ENCODE measurements at regions of chr22 and their contacts with region 1.

Region 1: GRCh38 chr22:20495861-20496681 is 476 bp upstream of the KLHL22 start:
- DNase-seq: peak; percentile 94
- ATAC-seq: peak; percentile 98
- H3K4me3 Mint-ChIP-seq: peak overlapping the region; percentile 88
- H3K27ac Mint-ChIP-seq: peak overlapping the region; percentile 84
- H3K4me1 Mint-ChIP-seq: peaks cover 34% of the 10 kb centered on the region
- H3K27me3 Mint-ChIP-seq: no peaks in the 10 kb centered on the region
- CTCF ChIP-seq: peak; percentile 95

Region 2: GRCh38 chr22:20430720-20431510 is 65.2 kb before region 1 on chr22:
- CTCF ChIA-PET with region 1: no interaction called
- POLR2A ChIA-PET with region 1: interaction called, 3 read pairs
- intact Hi-C with region 1: loop called (anchors 10 kb)
- DNase-seq: peak; percentile 65
- ATAC-seq: peak; percentile 47
- H3K4me3 Mint-ChIP-seq: peak overlapping the region; percentile 49
- H3K27ac Mint-ChIP-seq: no peak overlapping the region
- H3K4me1 Mint-ChIP-seq: peaks cover 15% of the 10 kb centered on the region
- H3K27me3 Mint-ChIP-seq: peaks cover 65% of the 10 kb centered on the region
- CTCF ChIP-seq: no peak

Region 3: DNA sequence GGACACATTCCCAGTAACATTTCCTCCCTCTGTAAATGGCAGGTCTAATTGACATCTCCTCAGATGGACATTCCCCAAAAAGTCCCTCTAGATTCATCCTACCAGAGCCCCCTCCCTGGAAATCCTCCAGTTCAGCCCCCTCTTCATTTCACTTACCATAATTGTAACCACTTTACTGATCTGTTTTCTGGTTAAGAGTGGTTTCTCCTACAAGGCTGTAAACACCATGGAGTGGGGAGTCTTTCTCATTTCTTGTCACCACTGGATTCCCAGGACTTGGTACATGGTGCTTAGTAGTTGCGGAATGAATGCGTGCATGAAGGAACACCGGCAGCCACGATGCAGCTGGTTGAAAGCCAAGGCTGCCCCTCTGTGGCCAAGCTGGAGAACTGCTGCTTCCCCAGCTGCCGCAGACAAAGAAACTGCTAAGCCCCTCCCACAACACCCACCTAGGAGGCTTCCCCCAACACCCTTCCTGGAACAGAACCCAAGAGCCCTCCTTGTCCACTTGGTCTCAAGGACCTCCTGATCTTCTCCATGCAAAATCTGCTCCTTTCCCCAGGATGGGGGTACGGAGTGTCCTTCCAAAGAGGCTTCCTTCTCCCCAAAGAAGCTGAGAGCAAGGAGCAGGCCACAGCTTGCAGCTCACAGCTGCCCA is 39.9 kb before region 1 on chr22:
- CTCF ChIA-PET with region 1: interaction called, 14 read pairs
- POLR2A ChIA-PET with region 1: no interaction called
- intact Hi-C with region 1: no loop called
- DNase-seq: peak; percentile 83
- ATAC-seq: peak; percentile 100
- H3K4me3 Mint-ChIP-seq: no peak overlapping the region
- H3K27ac Mint-ChIP-seq: peak overlapping the region; percentile 41
- H3K4me1 Mint-ChIP-seq: peaks cover 15% of the 10 kb centered on the region
- H3K27me3 Mint-ChIP-seq: no peaks in the 10 kb centered on the region
- CTCF ChIP-seq: peak; percentile 87

Region 4: DNA sequence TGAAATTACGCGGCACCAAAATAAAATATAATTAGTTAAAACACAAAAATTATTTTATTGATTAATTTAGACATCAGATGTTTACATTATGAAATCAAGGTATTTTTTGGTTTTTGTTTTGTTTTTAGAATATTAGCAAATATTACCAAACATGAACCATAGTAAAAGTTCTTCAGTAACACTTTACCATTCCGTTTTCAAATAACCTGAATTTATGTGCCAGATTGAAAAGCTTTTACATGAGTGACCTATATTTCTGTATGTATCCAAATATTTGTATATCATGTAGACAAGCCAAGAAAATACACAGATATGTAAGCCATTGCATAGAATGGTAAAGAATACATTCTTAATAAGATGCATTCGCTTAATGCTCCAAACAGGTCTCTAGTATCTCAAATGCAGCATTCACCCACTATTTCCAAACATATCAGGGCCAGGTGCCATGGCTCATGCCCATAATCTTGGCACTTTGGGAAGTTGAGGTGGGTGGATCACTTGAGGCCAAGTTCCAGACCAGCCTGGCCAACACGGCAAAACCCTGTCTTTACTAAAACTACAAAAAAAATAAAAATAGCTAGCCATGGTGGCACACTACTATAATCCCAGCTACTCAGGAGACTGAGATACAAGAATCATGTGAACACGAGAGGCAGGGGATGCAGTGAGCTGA is 175.5 kb after region 1 on chr22:
- CTCF ChIA-PET with region 1: no interaction called
- POLR2A ChIA-PET with region 1: no interaction called
- intact Hi-C with region 1: no loop called
- DNase-seq: no peak
- ATAC-seq: no peak
- H3K4me3 Mint-ChIP-seq: no peak overlapping the region
- H3K27ac Mint-ChIP-seq: no peak overlapping the region
- H3K4me1 Mint-ChIP-seq: no peaks in the 10 kb centered on the region
- H3K27me3 Mint-ChIP-seq: peaks cover 12% of the 10 kb centered on the region
- CTCF ChIP-seq: no peak